Body of pancreas (tissue), 4 donors: ENCODE measurements at regions of chr2 and their contacts with region 1.

Region 1: DNA sequence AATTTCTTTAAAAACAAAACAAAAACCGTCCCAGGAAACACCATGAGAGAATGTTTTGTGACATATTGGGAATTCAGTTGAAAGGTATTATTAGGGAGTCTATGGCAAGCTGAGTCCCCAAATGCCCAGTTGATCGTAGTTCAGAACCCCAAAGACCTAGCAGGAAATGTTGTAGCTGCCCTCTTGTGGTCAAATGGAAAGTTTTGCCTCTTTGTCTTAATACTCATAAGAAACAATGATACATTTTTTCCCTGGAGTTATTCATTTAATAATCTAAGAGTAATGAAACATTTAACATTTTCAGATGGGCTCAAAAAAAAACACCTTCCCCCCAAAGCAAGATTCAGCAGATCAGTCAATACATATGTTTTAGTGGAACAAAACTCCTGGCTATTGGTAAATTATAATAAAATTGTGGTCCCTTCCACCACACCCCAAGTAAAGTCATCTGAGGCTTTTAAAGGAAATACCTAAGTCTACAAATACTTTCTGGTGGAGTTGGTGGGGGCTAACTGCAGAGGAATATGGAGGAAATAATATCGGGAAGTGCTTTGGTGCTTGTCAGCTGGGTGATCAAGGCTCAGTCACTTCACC is 37.8 kb upstream of the EFEMP1 start:
- DNase-seq: peak in 2 of 4 donors; percentile 33 to 47
- ATAC-seq: peak; percentile 42
- H3K4me3 ChIP-seq: no peak overlapping the region
- H3K27ac ChIP-seq: no peak overlapping the region
- H3K4me1 ChIP-seq: peaks cover 27% of the 10 kb centered on the region
- H3K27me3 ChIP-seq: no peaks in the 10 kb centered on the region
- CTCF ChIP-seq: peak; percentile 28 to 61 (median 58)
- POLR2A ChIP-seq: no peak

Region 2: DNA sequence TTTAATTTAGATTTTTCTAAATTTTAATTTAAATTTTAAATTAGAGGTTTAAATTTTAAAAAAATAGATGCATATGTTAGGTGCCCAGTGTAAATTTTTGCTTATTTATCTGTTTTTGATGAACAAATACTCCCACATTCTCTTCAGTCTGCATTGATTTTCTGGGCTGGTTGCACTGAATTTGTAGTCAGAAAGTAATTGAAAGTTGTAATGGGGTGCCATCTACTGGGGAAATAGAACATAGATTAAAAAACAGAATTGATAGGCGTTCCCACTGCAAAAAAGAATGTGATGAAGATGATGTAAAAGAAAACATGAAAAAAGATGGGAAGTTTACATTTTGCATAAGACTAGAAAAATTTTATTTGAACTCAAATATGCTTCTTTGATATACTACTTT is 170.7 kb after region 1 on chr2:
- intact Hi-C with region 1: loop called (anchors 10 kb)
- DNase-seq: no peak
- ATAC-seq: peak; percentile 45
- H3K4me3 ChIP-seq: no peak overlapping the region
- H3K27ac ChIP-seq: no peak overlapping the region
- H3K4me1 ChIP-seq: no peaks in the 10 kb centered on the region
- H3K27me3 ChIP-seq: no peaks in the 10 kb centered on the region
- CTCF ChIP-seq: peak; percentile 40 to 83 (median 73)
- POLR2A ChIP-seq: no peak